ENCODE measurements at regions of chr1 and their contacts with region 1.

Region 1: GRCh38 chr1:205354259-205354904 is 2.3 kb downstream of the KLHDC8A start:
- DNase-seq: peak; percentile 72
- H3K4me3 ChIP-seq: no peak overlapping the region
- H3K27ac ChIP-seq: no peak overlapping the region
- H3K4me1 ChIP-seq: peaks cover 0 to 12% (median 9%) of the 10 kb centered on the region in 4 donors
- H3K27me3 ChIP-seq: peaks cover 0 to 15% (median 11%) of the 10 kb centered on the region in 3 donors
- CTCF ChIP-seq: peak; percentile 25 to 88 (median 75)
- EP300 ChIP-seq: no peak
- POLR2A ChIP-seq: no peak

Region 2: GRCh38 chr1:205162301-205162700 is 192.1 kb before region 1 on chr1:
- intact Hi-C with region 1: no loop called
- DNase-seq: no peak
- H3K4me3 ChIP-seq: no peak overlapping the region
- H3K27ac ChIP-seq: no peak overlapping the region
- H3K4me1 ChIP-seq: no peaks in the 10 kb centered on the region
- H3K27me3 ChIP-seq: no peaks in the 10 kb centered on the region
- CTCF ChIP-seq: no peak
- EP300 ChIP-seq: no peak
- POLR2A ChIP-seq: no peak

Region 3: DNA sequence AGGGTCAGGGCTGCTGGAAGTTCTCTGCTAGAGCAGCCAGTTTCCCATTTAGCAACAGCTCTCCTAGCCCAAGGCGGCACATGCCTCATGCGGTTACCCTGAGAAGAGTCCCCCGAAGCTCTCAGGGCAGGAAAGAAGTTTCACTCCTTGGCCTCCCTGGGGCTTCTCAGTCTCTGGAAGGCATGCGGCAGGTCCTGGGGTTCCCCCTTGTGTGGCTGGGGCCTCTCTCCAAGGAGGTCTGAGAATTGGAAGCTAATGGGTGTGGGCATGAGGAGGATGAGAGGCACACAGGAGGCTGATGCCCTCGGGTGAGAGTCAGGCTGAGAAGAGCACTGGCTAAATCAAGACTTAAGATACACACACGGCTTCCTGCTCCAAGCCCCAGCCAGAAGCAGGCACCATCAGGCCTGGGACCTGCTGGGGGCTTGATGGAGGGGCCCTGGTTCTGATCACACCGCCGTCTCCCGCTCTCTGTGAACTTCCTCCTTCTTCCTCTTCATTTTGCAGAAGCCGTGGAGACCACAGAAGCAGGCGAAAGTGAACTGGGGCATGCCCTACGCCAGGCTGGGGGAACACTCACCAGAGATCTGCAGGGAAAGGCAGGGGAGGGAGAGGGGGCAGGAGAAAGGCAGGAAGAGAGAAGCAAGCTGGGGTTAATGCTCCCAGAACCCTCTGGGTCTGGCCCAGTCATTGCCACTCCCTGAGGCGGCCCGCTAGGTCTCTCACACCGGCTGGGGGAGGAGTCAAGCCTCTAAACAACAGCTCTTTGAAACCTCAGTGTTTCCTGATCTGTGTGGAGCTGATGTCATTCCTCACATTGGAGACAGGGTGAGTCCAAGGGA is 86.3 kb after region 1 on chr1:
- intact Hi-C with region 1: loop called (anchors 5 kb)
- DNase-seq: peak; percentile 73
- H3K4me3 ChIP-seq: no peak overlapping the region
- H3K27ac ChIP-seq: peak overlapping the region in 3 of 4 donors; percentile 5 to 54 (median 27)
- H3K4me1 ChIP-seq: peaks cover 0 to 33% (median 24%) of the 10 kb centered on the region in 4 donors
- H3K27me3 ChIP-seq: peaks cover 0 to 15% (median 0%) of the 10 kb centered on the region in 3 donors
- CTCF ChIP-seq: no peak
- EP300 ChIP-seq: no peak
- POLR2A ChIP-seq: no peak

Region 4: GRCh38 chr1:205528887-205529825 is 174.8 kb after region 1 on chr1:
- intact Hi-C with region 1: loop called (anchors 10 kb)
- DNase-seq: peak; percentile 89
- H3K4me3 ChIP-seq: peak overlapping the region in 3 of 4 donors; percentile 20 to 45 (median 41)
- H3K27ac ChIP-seq: peak overlapping the region in 1 of 4 donors; percentile 21
- H3K4me1 ChIP-seq: peaks cover 0 to 12% (median 9%) of the 10 kb centered on the region in 4 donors
- H3K27me3 ChIP-seq: no peaks in the 10 kb centered on the region
- CTCF ChIP-seq: peak; percentile 61 to 97 (median 82)
- EP300 ChIP-seq: no peak
- POLR2A ChIP-seq: no peak

Region 5: DNA sequence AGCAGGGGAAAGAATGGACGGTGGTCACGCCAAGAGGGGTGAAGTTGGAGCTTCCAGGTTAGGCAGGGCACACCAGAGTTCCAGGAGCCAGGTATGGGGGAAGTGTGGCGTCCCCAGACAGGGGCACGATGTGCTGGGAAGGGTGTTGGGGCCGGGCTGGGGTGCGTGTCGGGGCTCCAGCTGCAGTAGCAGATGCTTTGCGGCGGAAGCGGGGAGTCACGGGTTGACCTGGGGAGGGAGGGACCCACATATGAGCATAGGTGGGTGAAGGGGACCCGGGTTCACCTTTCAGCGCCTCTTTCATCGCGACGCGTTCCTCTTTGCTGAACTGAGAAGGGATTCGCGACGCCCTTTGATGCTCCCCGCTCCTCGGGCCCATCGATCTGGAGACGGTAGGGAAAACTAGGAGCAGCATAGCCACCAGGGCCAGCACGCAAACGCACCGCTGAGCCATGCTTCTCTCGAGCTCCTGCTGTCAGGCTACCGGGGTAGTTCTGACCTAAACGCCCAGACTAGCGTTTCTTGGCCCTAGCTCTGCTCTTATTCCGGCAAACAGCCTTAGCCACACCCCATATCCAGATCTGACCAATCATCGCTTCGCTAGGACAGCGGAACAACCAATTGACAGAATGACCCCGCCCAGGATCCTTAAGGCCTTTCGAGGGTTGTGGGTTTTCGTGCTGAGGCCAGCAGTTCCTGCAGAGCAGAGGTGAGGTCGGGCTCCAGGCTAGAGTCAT is 495.4 kb after region 1 on chr1 and contains the start of gene PM20D1:
- intact Hi-C with region 1: no loop called
- DNase-seq: peak; percentile 86
- H3K4me3 ChIP-seq: peak within 1 kb of the TSS; percentile 18 to 49 (median 38)
- H3K27ac ChIP-seq: no peak within 1 kb of the TSS
- H3K4me1 ChIP-seq: peaks cover 0 to 7% (median 3%) of the 10 kb centered on the region in 4 donors
- H3K27me3 ChIP-seq: no peaks in the 10 kb centered on the region
- CTCF ChIP-seq: no peak
- EP300 ChIP-seq: no peak
- POLR2A ChIP-seq: no peak
- total RNA-seq, gene PM20D1: 0.36 TPM in 1 of 4 donors, not detected in the others

Measured in sigmoid colon (tissue), 7 donors.